Naive thymus-derived CD4-positive, alpha-beta T cell (primary cell): ENCODE measurements at regions of chr15 and their contacts with region 1.

Region 1: DNA sequence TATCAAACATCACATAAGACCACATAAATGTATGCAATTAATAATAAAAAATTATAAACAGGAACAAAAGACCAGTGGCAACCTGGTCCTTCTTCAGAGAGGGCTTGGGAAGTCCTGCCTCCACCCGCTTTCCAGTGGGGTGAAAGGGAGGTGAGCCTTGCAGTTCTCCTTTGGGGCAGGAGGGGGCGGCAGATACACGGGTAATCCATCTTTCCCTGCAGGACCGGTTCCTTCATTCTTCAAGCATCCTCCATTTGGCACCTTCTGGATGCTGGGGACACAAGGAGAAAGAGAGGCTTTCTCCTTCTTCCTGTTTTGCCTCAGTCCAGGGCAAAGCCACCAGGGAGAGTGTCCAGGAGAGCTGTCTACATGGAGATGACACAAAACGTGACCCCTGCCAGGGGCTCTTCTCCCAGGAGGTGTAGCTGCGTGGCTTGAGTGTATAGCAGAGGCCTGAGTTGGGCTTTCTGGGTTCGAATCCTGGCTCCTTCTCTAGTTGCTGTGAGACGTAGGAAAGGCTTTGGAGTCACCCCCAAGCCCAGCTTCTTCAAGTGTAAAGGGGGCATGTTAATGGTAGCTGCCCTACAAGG is 23.2 kb downstream of the RPLP1 start:
- DNase-seq: peak; percentile 39 to 77 (median 63)
- ATAC-seq: peak; percentile 90
- H3K4me3 ChIP-seq: no peak overlapping the region
- H3K4me3 Mint-ChIP-seq: no peak overlapping the region
- H3K27ac ChIP-seq: no peak overlapping the region
- H3K27ac Mint-ChIP-seq: no peak overlapping the region
- H3K4me1 ChIP-seq: no peaks in the 10 kb centered on the region
- H3K4me1 Mint-ChIP-seq: peaks cover 0 to 5% (median 0%) of the 10 kb centered on the region in 7 donors
- H3K27me3 ChIP-seq: no peaks in the 10 kb centered on the region
- H3K27me3 Mint-ChIP-seq: peaks cover 0 to 29% (median 0%) of the 10 kb centered on the region in 5 donors

Region 2: GRCh38 chr15:69729161-69729748 is 253.4 kb after region 1 on chr15:
- CTCF ChIA-PET with region 1: no interaction called
- POLR2A ChIA-PET with region 1: no interaction called
- intact Hi-C with region 1: loop called in 1 of 2 experiments (anchors 5 kb)
- DNase-seq: peak; percentile 38 to 79 (median 61)
- ATAC-seq: peak; percentile 53
- H3K4me3 ChIP-seq: no peak overlapping the region
- H3K4me3 Mint-ChIP-seq: no peak overlapping the region
- H3K27ac ChIP-seq: no peak overlapping the region
- H3K27ac Mint-ChIP-seq: peak overlapping the region in 3 of 9 donors; percentile 5 to 22 (median 19)
- H3K4me1 ChIP-seq: peaks cover 0 to 12% of the 10 kb centered on the region in 2 donors
- H3K4me1 Mint-ChIP-seq: peaks cover 13 to 64% (median 23%) of the 10 kb centered on the region in 7 donors
- H3K27me3 ChIP-seq: no peaks in the 10 kb centered on the region
- H3K27me3 Mint-ChIP-seq: peaks cover 0 to 30% (median 0%) of the 10 kb centered on the region in 5 donors

Region 3: GRCh38 chr15:70152070-70152480 is 676.2 kb after region 1 on chr15:
- CTCF ChIA-PET with region 1: no interaction called
- POLR2A ChIA-PET with region 1: no interaction called
- intact Hi-C with region 1: loop called in 1 of 2 experiments (anchors 1 kb)
- DNase-seq: no peak
- ATAC-seq: peak; percentile 63
- H3K4me3 ChIP-seq: no peak overlapping the region
- H3K4me3 Mint-ChIP-seq: no peak overlapping the region
- H3K27ac ChIP-seq: no peak overlapping the region
- H3K27ac Mint-ChIP-seq: peak overlapping the region in 1 of 9 donors; percentile 46
- H3K4me1 ChIP-seq: no peaks in the 10 kb centered on the region
- H3K4me1 Mint-ChIP-seq: peaks cover 0 to 3% (median 0%) of the 10 kb centered on the region in 7 donors
- H3K27me3 ChIP-seq: no peaks in the 10 kb centered on the region
- H3K27me3 Mint-ChIP-seq: peaks cover 0 to 27% (median 6%) of the 10 kb centered on the region in 5 donors

Region 4: GRCh38 chr15:70512772-70513362 is 1037.0 kb after region 1 on chr15:
- CTCF ChIA-PET with region 1: interaction called, 4 read pairs
- POLR2A ChIA-PET with region 1: no interaction called
- intact Hi-C with region 1: loop called in 1 of 2 experiments (anchors 2 kb)
- DNase-seq: peak; percentile 30 to 72 (median 45)
- ATAC-seq: peak; percentile 79
- H3K4me3 ChIP-seq: no peak overlapping the region
- H3K4me3 Mint-ChIP-seq: no peak overlapping the region
- H3K27ac ChIP-seq: no peak overlapping the region
- H3K27ac Mint-ChIP-seq: peak overlapping the region in 1 of 9 donors; percentile 32
- H3K4me1 ChIP-seq: peaks cover 0 to 10% of the 10 kb centered on the region in 2 donors
- H3K4me1 Mint-ChIP-seq: peaks cover 10 to 38% (median 17%) of the 10 kb centered on the region in 7 donors
- H3K27me3 ChIP-seq: no peaks in the 10 kb centered on the region
- H3K27me3 Mint-ChIP-seq: peaks cover 0 to 28% (median 0%) of the 10 kb centered on the region in 5 donors

Region 5: DNA sequence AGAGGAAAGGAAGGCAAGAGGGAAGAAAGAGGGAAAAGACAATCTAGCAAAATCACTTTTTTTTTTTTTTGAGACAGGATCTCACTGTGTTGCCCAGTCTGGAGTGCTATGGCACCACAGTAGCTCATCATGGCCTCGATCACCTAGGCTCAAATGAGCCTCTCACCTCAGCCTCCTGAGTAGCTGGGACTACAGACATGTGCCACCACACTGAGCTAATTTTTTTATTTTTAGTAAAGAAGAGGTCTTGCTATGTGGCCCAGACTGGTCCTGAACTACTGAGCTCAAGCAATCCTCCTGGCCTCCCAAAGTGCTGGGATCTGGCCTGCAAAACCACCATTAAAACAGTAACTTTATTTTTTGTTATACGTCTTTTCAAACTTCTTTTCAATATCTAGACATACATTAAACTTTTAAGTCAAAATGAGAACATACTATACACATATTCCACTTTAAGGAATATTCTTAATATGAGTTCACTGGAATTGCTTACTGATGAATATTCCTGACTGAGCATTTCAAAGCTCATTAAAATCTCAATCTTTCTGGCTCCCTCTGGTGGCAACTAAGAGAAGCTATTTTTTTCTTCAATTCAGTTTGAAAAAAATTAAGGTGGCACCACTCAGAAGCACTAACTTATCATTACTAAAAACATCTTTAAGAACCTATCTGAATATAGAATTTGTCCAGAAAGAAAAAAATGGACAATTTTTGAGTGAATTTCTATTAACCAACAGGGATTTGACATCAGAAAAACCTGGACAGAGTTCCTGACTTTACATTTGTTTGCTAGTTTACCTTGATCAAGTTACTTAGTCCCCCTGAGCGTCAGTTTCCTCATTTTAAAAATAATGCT is 1246.6 kb after region 1 on chr15:
- CTCF ChIA-PET with region 1: interaction called, 5 read pairs
- POLR2A ChIA-PET with region 1: no interaction called
- intact Hi-C with region 1: loop called (anchors 10 kb)
- DNase-seq: peak in 6 of 9 donors; percentile 2 to 42 (median 32)
- ATAC-seq: no peak
- H3K4me3 ChIP-seq: no peak overlapping the region
- H3K4me3 Mint-ChIP-seq: no peak overlapping the region
- H3K27ac ChIP-seq: no peak overlapping the region
- H3K27ac Mint-ChIP-seq: no peak overlapping the region
- H3K4me1 ChIP-seq: no peaks in the 10 kb centered on the region
- H3K4me1 Mint-ChIP-seq: peaks cover 0 to 4% (median 0%) of the 10 kb centered on the region in 7 donors
- H3K27me3 ChIP-seq: peaks cover 0 to 10% of the 10 kb centered on the region in 2 donors
- H3K27me3 Mint-ChIP-seq: peaks cover 0 to 38% (median 12%) of the 10 kb centered on the region in 5 donors